Uterus (tissue), 4 donors: ENCODE measurements at regions of chr14 and their contacts with region 1.

Region 1: GRCh38 chr14:73728717-73729330 is 14.6 kb upstream of the PNMA1 start:
- DNase-seq: peak; percentile 85
- H3K4me3 ChIP-seq: no peak overlapping the region
- H3K27ac ChIP-seq: peak overlapping the region; percentile 68 to 85
- H3K4me1 ChIP-seq: peaks cover 11 to 25% of the 10 kb centered on the region in 2 donors
- H3K27me3 ChIP-seq: no peaks in the 10 kb centered on the region
- CTCF ChIP-seq: peak; percentile 95 to 97 (median 96)
- POLR2A ChIP-seq: peak in 1 of 2 donors; percentile 11

Region 2: DNA sequence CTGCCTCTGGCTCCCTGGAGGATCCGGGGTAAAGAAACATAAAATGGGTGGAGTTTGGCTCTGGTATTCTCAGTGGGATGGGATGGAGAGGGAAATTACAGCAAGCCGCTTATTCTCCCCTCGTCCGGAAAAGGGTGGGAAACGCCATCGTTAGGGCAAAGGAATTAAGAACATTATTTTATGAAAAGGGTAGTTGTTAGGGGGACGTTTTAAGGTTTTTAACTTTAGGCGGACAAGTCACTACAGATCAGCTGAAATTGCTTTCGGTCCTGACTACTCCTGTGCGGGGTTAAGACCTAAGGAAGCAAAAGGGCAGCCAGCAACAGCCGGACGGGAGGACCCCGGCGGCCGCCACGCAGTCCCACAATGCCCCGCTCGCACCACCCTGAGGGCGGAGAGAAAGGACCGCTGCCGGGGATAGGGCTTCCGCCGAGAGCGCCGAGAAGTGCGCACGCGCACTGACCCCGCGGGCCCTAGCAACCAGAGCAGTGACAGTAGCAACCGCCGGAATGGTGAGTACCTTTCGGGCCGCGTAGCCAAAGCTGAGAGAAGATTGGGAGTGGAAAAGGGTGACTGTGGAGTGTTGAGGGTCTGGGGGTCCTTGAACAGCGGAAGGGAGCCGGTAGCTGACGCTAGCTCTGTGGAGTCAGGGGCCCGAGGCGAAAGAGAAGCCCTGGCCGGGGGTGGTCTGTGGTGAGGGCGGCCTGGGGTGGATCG is 84.1 kb before region 1 on chr14 and contains the start of gene DNAL1:
- intact Hi-C with region 1: loop called (anchors 10 kb)
- DNase-seq: peak; percentile 90 to 94
- H3K4me3 ChIP-seq: peak within 1 kb of the TSS; percentile 76 to 82
- H3K27ac ChIP-seq: peak within 1 kb of the TSS; percentile 85 to 90
- H3K4me1 ChIP-seq: peaks cover 0 to 3% of the 10 kb centered on the region in 2 donors
- H3K27me3 ChIP-seq: no peaks in the 10 kb centered on the region
- CTCF ChIP-seq: peak in 1 of 4 experiments; percentile 25
- POLR2A ChIP-seq: peak; percentile 33 to 60
- total RNA-seq, gene DNAL1: 2.0 to 29.7 (median 23.3) TPM

Region 3: GRCh38 chr14:73825551-73826188 is 96.8 kb after region 1 on chr14:
- intact Hi-C with region 1: loop called (anchors 5 kb)
- DNase-seq: peak; percentile 92 to 95
- H3K4me3 ChIP-seq: no peak overlapping the region
- H3K27ac ChIP-seq: no peak overlapping the region
- H3K4me1 ChIP-seq: no peaks in the 10 kb centered on the region
- H3K27me3 ChIP-seq: no peaks in the 10 kb centered on the region
- CTCF ChIP-seq: peak; percentile 92 to 94 (median 93)
- POLR2A ChIP-seq: no peak